ENCODE measurements at regions of chr7 and their contacts with region 1.

Region 1: DNA sequence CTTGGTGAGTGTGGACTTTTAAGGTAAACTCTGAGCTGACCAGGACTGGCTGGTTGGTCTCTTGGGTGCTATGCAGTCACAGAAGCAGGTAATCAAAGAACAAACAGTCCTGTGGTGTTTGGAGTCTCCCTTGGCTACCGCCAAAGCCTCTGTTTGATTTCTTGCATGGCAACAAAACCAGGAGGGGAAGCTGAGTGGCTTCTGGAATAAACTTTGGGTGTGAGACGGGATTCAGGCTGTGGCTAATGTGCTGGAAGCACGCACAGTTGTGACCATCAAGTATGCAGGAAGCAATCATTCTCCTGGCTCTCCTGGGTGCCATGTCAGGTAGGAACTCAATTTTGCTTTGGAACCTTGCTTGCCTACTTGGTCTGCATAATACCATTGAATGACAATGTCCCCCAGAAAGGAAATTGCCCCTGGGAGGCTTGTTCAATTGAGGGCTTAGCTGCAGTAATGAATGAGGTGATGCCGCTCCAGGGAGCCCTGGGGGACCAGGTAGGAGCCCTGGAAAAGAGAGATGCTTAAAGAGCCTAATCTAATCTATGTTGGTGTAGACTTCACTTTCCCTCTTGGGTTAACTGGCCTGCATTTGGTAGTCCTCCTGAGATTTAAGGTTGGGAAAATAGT is at the start of gene CDHR3:
- DNase-seq: no peak
- ATAC-seq: no peak
- H3K4me3 ChIP-seq: no peak within 1 kb of the TSS
- H3K27ac ChIP-seq: no peak within 1 kb of the TSS
- H3K4me1 ChIP-seq: no peaks in the 10 kb centered on the region
- H3K27me3 ChIP-seq: no peaks in the 10 kb centered on the region
- CTCF ChIP-seq: no peak
- total RNA-seq, gene CDHR3: 6.5 TPM

Region 2: DNA sequence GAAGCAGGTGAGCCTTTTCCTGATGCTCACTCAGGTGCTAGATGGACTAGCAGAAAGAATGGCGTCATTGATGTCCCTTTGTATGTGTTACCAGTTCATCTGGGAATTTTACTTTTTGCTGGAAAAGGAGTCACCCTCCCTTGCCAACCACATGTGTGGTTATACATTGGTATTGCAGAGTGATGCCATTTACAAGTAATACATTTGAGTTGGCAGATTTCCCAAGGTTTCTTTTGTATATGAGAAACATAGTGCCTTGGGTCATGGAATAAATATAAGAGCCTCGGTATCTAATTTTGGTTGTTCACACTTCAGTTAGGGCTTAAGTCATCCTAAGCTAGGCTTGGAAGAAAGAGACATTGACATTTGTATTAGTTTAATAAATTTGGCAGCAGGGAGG is 76.4 kb before region 1 on chr7:
- CTCF ChIA-PET with region 1: no interaction called
- POLR2A ChIA-PET with region 1: interaction called, 16 read pairs
- in situ Hi-C with region 1: no loop called
- intact Hi-C with region 1: no loop called
- DNase-seq: no peak
- ATAC-seq: no peak
- H3K4me3 ChIP-seq: no peak overlapping the region
- H3K27ac ChIP-seq: no peak overlapping the region
- H3K4me1 ChIP-seq: peaks cover 4% of the 10 kb centered on the region
- H3K27me3 ChIP-seq: no peaks in the 10 kb centered on the region
- CTCF ChIP-seq: no peak

Region 3: DNA sequence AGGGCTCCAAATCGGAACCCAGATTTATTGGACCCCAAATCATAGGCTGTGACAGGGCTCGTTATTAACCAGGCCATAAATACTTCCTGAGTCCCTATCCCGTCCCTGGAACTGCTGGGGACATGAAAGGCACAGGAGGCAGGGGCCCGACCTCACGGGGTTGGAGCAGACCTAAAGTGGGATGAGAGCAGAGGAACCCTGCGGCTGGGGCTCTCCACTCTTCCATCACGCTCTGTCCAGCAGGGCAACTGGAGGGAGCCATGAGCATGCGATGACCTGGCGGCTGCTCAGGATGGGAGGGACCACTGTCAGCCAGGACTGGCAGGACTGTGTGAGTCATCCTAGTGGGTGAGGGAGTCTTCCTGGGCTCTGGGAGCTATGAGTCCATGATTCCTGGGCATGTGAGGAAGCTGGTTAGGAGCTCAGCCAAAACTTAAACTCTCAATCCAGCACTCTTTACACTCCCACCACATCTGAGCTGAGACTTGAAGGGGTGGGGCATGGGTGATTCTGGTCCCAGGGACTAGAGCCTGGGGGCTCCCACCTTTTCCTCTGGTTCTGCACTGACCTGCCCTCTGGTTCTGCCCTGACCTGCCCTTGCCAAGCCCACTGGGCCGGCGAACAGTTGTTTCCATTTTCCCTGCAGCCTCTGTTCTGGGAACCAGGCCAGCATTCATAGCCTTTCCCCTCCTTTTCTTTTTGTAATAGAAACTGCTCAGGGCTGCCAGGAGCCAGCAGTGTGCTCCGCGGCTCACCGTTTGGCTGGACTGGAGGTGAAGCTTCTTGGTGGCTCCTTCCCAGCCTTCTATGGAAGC is 101.8 kb after region 1 on chr7:
- CTCF ChIA-PET with region 1: no interaction called
- POLR2A ChIA-PET with region 1: no interaction called
- in situ Hi-C with region 1: no loop called
- intact Hi-C with region 1: no loop called
- DNase-seq: peak; percentile 81
- ATAC-seq: peak; percentile 94
- H3K4me3 ChIP-seq: peak overlapping the region; percentile 12 to 41
- H3K27ac ChIP-seq: peak overlapping the region; percentile 90
- H3K4me1 ChIP-seq: peaks cover 44% of the 10 kb centered on the region
- H3K27me3 ChIP-seq: no peaks in the 10 kb centered on the region
- CTCF ChIP-seq: no peak